BJ (cell line): ENCODE measurements at regions of chr7 and their contacts with region 1.

Region 1: GRCh38 chr7:107743567-107744344 is at the start of gene CBLL1:
- DNase-seq: peak; percentile 77
- H3K4me3 ChIP-seq: peak within 1 kb of the TSS; percentile 74
- H3K27me3 ChIP-seq: no peaks in the 10 kb centered on the region
- CTCF ChIP-seq: peak; percentile 82
- polyA plus RNA-seq, gene CBLL1: 12.2 and 13.9 TPM in 2 replicates

Region 2: DNA sequence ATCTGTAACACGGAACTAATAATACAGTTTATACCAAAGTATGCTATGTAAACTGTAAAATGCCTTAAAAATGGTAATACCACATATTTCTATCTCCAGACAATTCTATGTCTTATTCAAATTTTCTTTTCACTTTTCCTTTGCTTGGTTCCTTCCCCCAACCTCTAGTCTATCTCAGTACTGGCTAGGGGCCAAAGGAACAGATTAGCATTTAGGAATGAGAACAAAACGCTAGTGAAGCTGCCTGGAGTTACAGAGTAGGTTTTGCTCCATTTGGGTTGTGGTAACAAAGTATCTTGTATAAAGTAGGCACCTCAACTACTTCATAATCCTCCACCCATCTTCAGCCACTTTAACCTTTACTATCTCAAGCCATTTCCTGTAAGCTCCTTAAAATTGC is 480.9 kb before region 1 on chr7:
- CTCF ChIA-PET with region 1: no interaction called
- POLR2A ChIA-PET with region 1: no interaction called
- DNase-seq: no peak
- H3K4me3 ChIP-seq: no peak overlapping the region
- H3K27me3 ChIP-seq: no peaks in the 10 kb centered on the region
- CTCF ChIP-seq: no peak

Region 3: GRCh38 chr7:107462740-107463444 is 280.9 kb before region 1 on chr7:
- CTCF ChIA-PET with region 1: interaction called, 12 read pairs
- POLR2A ChIA-PET with region 1: no interaction called
- DNase-seq: no peak
- H3K4me3 ChIP-seq: no peak overlapping the region
- H3K27me3 ChIP-seq: no peaks in the 10 kb centered on the region
- CTCF ChIP-seq: peak; percentile 84

Region 4: DNA sequence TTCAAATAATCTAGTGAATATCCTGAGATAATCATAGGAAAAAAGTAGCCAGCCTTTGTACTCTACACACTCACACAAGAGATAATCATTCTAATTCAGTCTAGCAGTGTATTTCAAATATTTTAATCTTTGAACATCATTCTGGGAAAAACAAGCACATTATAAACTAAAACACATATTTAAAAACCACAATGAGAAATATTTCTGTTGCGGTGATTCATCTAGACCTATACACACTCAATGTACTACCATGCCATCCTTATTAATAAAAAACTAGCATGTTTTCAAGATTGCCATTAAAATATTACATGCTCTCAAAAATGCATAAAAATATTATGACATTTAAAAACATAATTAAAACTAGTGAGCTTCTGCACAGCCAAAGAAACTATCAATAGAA is 191.8 kb before region 1 on chr7:
- CTCF ChIA-PET with region 1: no interaction called
- POLR2A ChIA-PET with region 1: no interaction called
- DNase-seq: no peak
- H3K4me3 ChIP-seq: no peak overlapping the region
- H3K27me3 ChIP-seq: no peaks in the 10 kb centered on the region
- CTCF ChIP-seq: no peak

Region 5: DNA sequence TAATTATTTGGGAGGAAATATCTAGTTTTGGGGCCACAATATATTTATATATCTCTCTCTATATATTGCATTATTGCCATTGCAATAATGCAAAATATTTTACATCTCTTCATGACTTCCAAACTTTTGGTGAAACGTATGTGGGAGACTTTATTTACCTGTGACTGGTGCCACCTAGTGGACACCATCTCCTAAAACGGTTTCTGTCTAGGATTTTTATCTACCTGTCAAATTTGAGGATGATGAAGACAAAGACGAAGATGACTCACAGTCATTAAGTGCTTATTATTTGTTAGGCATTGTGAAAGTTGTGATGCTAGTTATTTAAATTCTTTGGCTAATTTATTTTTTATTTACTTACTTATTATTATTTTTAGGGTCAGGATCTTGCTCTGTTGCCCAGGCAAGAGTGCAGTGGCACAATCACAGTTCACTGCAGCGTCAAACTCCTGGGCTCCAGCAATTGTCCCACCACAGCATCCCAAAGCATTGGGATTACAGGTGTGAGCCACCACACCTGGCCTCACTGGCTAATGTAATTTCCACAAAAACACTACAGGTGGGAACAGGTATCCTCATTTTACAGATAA is 18.5 kb before region 1 on chr7:
- CTCF ChIA-PET with region 1: interaction called, 14 read pairs
- POLR2A ChIA-PET with region 1: no interaction called
- DNase-seq: no peak
- H3K4me3 ChIP-seq: no peak overlapping the region
- H3K27me3 ChIP-seq: peaks cover 6% of the 10 kb centered on the region
- CTCF ChIP-seq: peak; percentile 53

Region 6: DNA sequence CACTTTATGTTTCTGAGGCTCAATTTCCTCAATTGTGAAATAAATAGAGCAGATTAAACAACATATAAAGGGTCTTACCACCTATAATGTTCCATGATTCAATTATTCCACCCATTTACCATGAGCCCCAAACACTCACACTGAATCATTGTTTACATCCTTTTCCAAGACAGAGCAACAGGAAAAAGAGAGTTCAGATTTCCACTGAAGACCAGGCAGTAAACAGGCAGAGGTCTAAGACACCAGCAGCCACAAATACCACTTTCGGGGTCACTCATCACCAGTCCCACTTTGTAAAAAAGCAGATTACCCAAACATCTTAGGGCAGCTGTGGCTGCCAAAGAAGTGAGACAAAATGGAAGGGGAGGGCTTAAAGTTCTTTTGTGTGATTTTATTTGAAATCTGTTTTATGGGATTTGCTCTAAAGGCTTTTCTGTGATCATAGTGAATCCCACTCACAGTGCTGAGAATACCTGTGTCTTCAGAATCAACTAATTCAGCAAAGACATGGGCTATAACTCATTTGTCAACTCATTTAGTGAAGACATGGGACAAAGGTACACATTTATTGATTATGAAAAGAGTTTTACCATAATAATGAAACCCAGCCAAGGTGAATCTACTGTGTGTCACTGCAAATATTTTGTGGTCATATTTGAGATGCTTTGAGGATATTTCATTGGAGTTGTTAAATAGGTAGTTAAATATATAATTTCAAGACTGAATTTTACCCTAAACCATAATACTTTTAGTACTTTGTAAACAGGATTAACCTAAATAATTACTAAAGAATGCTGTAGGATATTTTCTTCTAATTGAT is 122.4 kb after region 1 on chr7:
- CTCF ChIA-PET with region 1: interaction called, 15 read pairs
- POLR2A ChIA-PET with region 1: no interaction called
- DNase-seq: no peak
- H3K4me3 ChIP-seq: no peak overlapping the region
- H3K27me3 ChIP-seq: no peaks in the 10 kb centered on the region
- CTCF ChIP-seq: no peak

Region 7: GRCh38 chr7:107902381-107902780 is 158.6 kb after region 1 on chr7:
- CTCF ChIA-PET with region 1: no interaction called
- POLR2A ChIA-PET with region 1: interaction called, 14 read pairs
- DNase-seq: no peak
- H3K4me3 ChIP-seq: no peak overlapping the region
- H3K27me3 ChIP-seq: no peaks in the 10 kb centered on the region
- CTCF ChIP-seq: no peak